Right ventricle myocardium superior (tissue), 1 donor: ENCODE measurements at regions of chr15 and their contacts with region 1.

Region 1: DNA sequence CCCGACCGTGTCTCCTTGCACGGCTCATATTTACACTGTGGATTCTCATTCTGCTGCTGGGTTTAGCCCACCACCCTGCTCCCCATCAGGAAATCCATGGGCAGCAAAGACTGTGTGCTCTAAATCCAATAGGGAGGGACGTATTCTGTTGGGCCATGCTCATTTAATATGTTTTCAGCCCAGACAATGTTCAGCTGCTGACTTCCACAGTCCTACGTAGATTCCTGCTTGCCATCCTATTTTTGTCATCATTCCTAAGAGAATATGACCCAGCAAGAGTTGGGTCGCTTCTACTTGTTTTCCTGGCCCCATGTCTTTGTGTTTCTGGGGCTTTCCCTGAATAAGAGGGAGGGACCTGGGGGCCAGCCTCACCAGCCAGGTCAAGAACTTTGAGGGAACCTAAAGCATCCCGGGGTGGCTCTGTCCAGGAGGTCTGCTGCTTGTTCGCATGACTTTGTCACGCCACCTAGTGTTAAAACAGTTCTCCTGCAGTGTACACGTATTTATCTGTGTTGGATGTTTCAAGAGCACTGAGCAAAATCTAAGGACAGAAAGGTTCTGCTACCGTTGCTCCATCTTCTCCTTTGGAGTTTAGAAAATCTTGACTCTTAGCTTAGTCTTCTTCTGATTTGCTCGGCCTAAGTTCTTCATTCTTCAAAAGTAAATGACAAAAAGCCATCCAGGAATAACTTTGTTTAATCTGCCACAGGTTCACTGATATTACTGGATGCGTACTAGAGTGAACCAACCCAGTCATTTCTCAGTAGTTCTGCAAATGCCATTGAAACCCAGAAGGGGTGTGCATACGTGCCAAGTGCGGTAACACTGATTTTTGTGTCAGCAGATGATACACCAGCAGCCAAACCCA is 79.8 kb upstream of the NR2E3 start:
- DNase-seq: no peak
- ATAC-seq: peak; percentile 87

Region 2: DNA sequence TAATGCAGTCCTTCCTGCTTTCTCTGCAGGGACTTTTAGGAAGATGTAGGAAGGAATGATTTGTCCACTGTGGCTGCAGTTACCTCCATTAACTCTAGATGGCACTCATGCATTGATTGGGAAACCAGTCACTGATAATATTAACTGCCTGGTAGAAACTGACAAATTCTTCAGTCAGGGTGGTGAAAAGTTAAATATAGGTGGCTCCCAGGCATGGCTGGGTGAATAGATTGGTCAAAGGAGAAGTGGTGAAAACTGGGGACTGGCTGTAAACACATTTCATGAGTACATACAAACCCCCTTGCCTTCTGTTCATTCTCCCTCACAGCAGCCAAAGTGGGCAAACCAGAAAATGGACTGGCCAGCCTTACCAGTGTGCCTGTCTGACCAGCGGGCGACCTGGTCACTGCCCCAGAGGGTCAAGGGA is 281.8 kb before region 1 on chr15:
- intact Hi-C with region 1: loop called (anchors 5 kb)
- DNase-seq: no peak
- ATAC-seq: peak; percentile 90

Region 3: DNA sequence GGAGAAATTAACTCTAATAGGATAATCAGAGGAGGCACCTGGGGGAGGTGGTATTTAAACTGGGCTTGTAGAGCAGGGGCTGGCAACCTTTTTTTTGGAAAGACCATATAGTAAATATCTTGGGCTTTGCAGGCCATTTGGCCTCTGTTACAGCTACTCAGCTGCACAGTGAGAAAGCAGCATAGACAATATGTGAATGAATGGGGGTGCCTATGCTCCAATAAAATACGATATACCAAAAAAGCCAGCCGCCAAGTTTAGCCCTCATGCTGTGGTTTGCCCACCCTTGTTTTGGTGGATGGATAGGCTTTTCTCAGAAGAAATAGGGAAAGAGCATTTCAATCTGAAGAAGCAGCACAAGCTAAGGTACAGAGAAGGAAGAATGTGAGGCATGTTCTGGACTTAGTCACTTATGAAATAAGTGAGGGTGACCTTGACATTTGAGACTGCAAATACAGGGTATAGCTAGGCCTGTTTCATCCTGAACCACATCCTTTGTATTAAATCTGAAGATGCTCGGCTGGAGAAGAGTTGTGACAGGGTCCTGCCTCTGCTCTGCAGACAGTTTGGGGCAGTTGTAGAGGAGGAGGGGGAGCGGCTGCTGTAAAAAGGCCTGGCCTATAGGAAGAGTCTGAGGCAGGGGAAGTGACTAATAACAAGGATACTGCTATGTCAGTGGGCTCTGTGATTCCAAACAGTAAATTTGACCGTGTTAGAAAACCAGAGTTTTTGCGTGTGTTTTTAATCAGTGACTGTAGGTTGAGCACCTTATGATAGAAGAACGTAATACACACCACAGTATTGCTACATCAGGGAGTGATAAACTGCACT is 51.1 kb before region 1 on chr15:
- intact Hi-C with region 1: no loop called
- DNase-seq: no peak
- ATAC-seq: no peak

Region 4: DNA sequence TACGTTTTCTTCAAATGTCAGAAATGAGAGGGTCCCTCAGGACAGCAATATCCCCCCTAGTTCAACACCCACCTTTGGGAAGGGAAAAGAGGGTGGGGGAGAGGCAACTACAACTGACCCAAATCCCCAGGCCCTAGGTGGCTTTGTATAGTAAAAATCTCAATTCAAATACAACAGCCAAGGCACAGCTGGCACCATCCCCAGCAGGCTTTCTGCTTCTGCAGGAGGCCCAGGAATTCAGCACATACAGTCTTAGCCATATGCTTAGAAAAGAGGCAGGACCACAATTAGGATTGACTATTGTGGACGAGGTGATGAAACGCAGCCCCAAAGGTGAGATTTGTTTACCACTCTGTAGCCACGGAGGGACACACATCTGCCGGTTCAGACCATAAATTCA is 95.7 kb after region 1 on chr15:
- intact Hi-C with region 1: no loop called
- DNase-seq: no peak
- ATAC-seq: no peak

Region 5: DNA sequence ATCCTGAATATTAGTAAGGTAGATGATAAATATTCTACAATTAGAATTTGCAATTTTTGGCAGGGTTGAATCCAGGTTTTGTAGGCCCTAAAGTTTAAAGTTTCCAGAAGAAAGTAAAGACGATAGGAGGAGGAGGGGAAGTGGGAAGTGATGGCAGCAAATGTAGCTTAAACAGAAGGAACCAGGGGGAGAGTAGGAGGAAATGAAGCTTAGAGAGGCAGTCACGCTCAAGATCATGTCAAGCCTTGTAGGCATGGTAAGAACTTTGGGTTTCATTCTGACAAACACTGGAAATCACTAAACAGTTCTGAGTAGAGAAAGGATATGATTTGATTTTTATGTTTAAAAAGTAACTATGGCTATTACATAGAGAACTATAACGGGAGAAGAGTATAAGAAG is 143.7 kb after region 1 on chr15:
- intact Hi-C with region 1: no loop called
- DNase-seq: no peak
- ATAC-seq: no peak